ENCODE measurements at regions of chr4 and their contacts with region 1.

Region 1: DNA sequence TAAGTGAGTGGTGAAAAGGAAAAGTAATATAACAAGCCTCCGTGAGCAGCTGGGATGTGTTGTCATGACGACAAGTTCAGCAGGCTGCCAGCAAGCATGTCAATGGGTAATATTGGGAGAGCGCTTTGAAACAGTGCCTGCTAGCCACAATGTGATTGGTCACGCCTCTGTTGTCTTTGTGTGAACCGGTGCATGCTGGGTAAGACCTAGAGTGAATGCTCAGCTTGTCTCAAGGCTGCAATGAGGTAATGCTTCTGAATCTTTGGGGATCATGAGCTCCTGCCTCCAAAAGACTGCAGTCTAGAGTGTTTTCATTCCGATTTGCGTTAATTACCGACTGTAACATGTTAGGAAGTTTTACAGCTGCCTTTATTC is 54.9 kb downstream of the STOX2 start:
- DNase-seq: peak; percentile 82 to 98 (median 92)
- H3K4me3 ChIP-seq: peak overlapping the region; percentile 26 to 76 (median 55)
- H3K27ac ChIP-seq: peak overlapping the region; percentile 33 to 97 (median 90)
- H3K27me3 ChIP-seq: no peaks in the 10 kb centered on the region
- CTCF ChIP-seq: peak in 6 of 56 donors; percentile 5 to 30 (median 16)

Region 2: DNA sequence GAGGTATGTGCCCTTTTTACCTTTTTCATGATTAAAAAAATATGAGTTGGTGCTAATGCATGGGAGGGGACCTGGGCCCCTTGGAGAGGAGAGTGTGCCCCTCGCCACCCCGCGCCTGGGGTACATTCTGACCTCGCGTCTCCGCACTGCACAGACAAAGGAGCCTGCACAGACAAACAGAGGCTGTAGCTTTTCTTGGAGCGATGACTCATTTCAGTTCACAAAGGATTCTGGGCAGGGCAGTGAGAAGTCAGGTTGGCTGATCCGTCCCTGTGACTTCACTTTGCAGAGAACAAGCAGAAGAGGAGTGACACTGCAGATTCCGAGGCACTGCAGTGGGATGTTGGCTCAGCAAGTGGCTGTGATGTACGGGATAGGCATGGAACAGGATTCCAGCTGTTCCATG is 28.0 kb after region 1 on chr4:
- intact Hi-C with region 1: loop called in 1 of 2 experiments (anchors 1 kb)
- DNase-seq: peak; percentile 33 to 91 (median 74)
- H3K4me3 ChIP-seq: peak overlapping the region; percentile 29 to 75 (median 57)
- H3K27ac ChIP-seq: peak overlapping the region; percentile 18 to 95 (median 88)
- H3K27me3 ChIP-seq: no peaks in the 10 kb centered on the region
- CTCF ChIP-seq: peak in 2 of 56 donors; percentile 11 to 17

Region 3: GRCh38 chr4:184196862-184197331 is 236.9 kb after region 1 on chr4:
- intact Hi-C with region 1: no loop called
- DNase-seq: no peak
- H3K4me3 ChIP-seq: no peak overlapping the region
- H3K27ac ChIP-seq: peak overlapping the region in 4 of 59 donors; percentile 8 to 44 (median 32)
- H3K27me3 ChIP-seq: no peaks in the 10 kb centered on the region
- CTCF ChIP-seq: no peak